ENCODE measurements at regions of chr9 and their contacts with region 1.

Region 1: GRCh38 chr9:122374885-122375420 is 4.1 kb downstream of the PTGS1 start:
- DNase-seq: no peak
- H3K4me3 ChIP-seq: no peak overlapping the region
- H3K4me3 Mint-ChIP-seq: no peak overlapping the region
- H3K27ac Mint-ChIP-seq: no peak overlapping the region
- H3K4me1 ChIP-seq: no peaks in the 10 kb centered on the region
- H3K4me1 Mint-ChIP-seq: no peaks in the 10 kb centered on the region
- H3K27me3 ChIP-seq: no peaks in the 10 kb centered on the region
- H3K27me3 Mint-ChIP-seq: peaks cover 7% of the 10 kb centered on the region
- CTCF ChIP-seq: no peak

Region 2: DNA sequence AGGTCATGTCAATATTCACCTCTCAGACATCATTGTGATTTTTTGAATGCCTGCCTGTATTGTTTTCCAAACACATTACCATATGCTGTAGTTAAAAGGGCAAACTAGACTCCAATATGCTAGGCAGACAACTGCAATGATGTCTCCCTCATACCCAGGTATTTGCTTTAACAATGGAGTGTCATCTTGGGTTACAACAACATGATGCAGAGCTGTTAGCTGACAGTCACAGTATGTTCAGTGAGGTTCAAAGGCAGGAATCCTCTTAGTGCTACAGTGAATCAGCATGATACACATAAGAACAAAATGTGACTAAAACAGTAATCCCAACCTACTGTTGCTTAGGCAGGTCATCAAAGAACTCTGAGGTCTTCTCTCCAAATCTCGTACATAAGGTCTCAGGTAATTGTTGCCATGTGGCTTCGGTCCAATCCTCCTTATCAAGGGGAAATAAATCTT is 78.8 kb after region 1 on chr9:
- CTCF ChIA-PET with region 1: no interaction called
- POLR2A ChIA-PET with region 1: no interaction called
- intact Hi-C with region 1: loop called (anchors 5 kb)
- DNase-seq: no peak
- H3K4me3 ChIP-seq: no peak overlapping the region
- H3K4me3 Mint-ChIP-seq: no peak overlapping the region
- H3K27ac Mint-ChIP-seq: no peak overlapping the region
- H3K4me1 ChIP-seq: no peaks in the 10 kb centered on the region
- H3K4me1 Mint-ChIP-seq: no peaks in the 10 kb centered on the region
- H3K27me3 ChIP-seq: no peaks in the 10 kb centered on the region
- H3K27me3 Mint-ChIP-seq: peaks cover 5% of the 10 kb centered on the region
- CTCF ChIP-seq: no peak

Region 3: GRCh38 chr9:122526600-122526999 is 151.6 kb after region 1 on chr9:
- CTCF ChIA-PET with region 1: no interaction called
- POLR2A ChIA-PET with region 1: no interaction called
- intact Hi-C with region 1: no loop called
- DNase-seq: no peak
- H3K4me3 ChIP-seq: no peak overlapping the region
- H3K4me3 Mint-ChIP-seq: no peak overlapping the region
- H3K27ac Mint-ChIP-seq: no peak overlapping the region
- H3K4me1 ChIP-seq: no peaks in the 10 kb centered on the region
- H3K4me1 Mint-ChIP-seq: peaks cover 6% of the 10 kb centered on the region
- H3K27me3 ChIP-seq: peaks cover 3% of the 10 kb centered on the region; the same call in 1 of the 2 replicates
- H3K27me3 Mint-ChIP-seq: peaks cover 2% of the 10 kb centered on the region
- CTCF ChIP-seq: no peak